Ascending aorta (tissue), 2 donors: ENCODE measurements at regions of chr7 and their contacts with region 1.

Region 1: DNA sequence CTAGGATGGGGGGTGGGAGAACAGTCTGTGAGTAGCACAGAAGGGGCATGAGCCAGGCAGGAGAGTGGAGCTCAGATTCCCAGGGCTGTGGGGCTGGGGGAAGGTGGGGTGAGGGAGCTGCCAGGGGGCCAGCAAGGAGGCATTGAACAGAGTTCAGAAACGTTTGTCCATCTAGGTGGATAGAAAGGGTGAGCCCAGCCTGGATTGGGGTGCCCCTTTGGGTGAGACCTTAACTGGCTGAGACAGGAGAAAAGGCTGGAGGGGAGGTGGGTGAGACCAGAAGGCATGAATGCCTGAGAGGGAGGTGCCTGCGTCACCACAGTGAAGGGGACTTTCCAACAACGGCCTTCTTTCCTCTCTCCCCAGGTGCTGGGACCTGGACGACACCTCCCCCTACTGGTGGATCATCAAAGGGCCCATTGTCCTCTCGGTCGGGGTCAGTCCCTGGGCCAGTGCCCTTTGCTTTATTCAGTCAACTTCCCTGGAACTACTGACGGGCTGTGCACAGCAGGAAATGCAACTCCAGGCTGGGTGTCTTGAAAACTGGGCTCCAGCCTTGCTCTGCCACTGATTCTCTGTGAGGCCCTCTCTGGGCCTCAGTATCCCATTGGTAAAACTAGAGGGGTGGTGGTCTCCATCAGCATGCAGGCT is 11.0 kb downstream of the GHRHR start:
- DNase-seq: peak in 1 of 2 donors; percentile 73
- H3K4me3 ChIP-seq: no peak overlapping the region
- H3K27ac ChIP-seq: no peak overlapping the region
- H3K4me1 ChIP-seq: no peaks in the 10 kb centered on the region
- H3K27me3 ChIP-seq: no peaks in the 10 kb centered on the region
- CTCF ChIP-seq: peak; percentile 45 to 69 (median 52)

Region 2: DNA sequence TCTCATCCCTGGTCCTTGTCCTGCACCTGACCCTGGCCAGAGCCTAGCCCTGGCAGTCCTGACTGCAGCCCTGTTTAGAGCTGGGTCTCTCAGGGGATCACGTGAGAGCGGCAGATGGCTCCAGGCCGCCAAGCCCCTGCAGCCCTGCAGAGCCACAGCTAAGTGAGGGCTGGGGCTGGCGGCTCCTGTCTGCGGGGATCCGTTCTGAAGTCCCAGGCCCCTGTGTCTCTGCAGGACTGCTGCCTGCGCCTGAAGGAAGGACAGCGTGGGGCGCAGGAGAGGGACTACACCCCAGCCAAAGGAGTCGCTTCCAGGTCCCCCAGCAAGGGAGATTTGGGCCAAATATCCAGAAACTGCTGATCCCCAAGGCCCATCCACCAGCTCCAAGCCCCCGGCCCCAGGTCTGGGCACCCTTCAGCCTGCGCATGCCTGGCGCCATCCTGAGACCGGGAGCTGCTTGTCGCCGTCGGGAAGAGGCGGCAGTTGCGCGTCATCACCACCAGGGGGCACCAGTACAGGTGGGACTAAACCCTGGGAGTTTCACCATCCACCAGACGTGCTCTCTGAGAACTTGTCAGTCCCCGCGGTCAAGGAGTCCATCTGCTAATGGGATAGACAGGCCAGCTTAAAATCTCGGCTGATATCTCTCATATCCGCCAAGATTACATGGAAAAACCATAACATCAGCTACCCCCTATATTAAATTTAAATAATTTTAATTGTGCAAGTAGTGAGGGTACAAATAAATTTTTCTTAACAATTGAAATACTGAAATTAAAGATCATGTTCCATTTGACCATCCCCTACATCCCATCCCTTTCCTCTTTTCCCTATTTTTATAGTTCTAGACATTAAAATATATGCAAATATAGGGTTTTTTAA is 36.1 kb before region 1 on chr7:
- intact Hi-C with region 1: loop called (anchors 5 kb)
- DNase-seq: peak in 1 of 2 donors; percentile 89
- H3K4me3 ChIP-seq: no peak overlapping the region
- H3K27ac ChIP-seq: no peak overlapping the region
- H3K4me1 ChIP-seq: peaks cover 0 to 3% of the 10 kb centered on the region in 2 donors
- H3K27me3 ChIP-seq: no peaks in the 10 kb centered on the region
- CTCF ChIP-seq: peak; percentile 76 to 99 (median 96)

Region 3: DNA sequence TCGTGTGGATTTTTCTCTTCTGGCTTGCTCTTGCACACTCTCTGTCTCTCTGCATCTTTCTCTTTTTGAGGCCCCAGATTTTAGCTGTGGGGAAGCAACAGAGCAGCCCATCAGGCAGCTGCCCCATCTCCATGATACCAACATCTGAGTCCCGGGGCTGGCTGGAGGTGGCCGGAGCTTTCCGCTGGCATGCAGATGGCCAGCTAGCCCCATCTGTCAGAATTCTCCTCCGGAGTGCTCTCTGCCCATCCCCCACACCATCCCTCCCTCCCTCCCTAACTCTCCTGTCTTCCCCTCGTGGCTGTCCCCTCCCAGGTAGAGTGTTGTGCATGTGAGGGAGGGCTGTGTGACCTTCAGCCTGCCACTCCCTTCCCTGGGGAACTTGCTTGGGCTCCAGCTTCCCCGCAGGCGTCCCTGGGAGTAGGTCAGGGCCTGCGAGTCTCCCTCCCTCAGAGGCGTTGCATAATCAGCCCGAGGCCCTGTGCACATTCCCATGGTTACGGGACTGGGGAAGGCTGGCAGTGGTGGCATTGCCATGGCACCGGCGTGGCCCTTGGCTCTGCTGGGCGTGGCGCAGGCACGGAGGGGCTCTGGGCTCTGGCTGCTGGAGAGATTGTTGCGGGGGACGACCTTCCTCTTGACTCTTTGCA is 13.7 kb after region 1 on chr7:
- intact Hi-C with region 1: no loop called
- DNase-seq: no peak
- H3K4me3 ChIP-seq: no peak overlapping the region
- H3K27ac ChIP-seq: no peak overlapping the region
- H3K4me1 ChIP-seq: peaks cover 0 to 18% of the 10 kb centered on the region in 2 donors
- H3K27me3 ChIP-seq: no peaks in the 10 kb centered on the region
- CTCF ChIP-seq: no peak